Naive thymus-derived CD8-positive, alpha-beta T cell (primary cell): ENCODE measurements at regions of chr5 and their contacts with region 1.

Region 1: DNA sequence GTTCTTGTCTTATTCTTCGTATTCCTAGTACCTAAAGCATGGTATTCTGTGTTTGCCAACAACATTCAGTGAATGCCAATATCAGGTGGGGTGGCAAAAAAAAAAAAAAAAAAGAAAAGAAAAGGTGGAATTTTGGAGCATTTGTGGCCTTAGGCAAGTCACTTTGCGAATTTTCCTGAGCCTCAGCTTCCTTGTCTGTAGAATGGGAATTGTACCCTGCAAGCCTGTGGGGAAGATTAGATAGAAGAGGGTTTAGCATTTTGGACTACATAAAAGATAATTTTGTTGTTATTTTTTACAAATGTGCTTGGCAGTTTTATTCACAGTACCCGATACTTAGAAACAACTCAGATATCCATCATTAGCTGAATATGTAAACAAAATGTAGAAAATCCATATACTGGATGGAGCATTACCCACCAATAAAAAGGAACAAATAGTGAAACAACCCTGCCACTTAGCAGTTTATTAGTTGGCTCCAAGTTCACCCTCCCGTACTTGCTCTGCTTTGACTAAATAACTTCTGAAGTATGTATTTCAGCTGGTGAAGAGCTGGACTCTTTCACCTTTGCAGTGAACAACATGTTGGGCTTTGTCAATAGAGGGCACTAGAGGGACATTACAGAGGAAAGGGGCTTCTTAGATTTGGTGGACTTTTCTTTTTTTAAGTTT is 13.6 kb downstream of the UBE2D2 start:
- DNase-seq: peak in 6 of 10 donors; percentile 14 to 62 (median 44)
- ATAC-seq: peak; percentile 39 to 58
- H3K4me3 Mint-ChIP-seq: peak overlapping the region in 9 of 10 donors; percentile 23 to 75 (median 65)
- H3K27ac Mint-ChIP-seq: peak overlapping the region in 9 of 10 donors; percentile 52 to 93 (median 87)
- H3K4me1 Mint-ChIP-seq: peaks cover 33 to 87% (median 78%) of the 10 kb centered on the region in 4 donors
- H3K27me3 Mint-ChIP-seq: no peaks in the 10 kb centered on the region

Region 2: DNA sequence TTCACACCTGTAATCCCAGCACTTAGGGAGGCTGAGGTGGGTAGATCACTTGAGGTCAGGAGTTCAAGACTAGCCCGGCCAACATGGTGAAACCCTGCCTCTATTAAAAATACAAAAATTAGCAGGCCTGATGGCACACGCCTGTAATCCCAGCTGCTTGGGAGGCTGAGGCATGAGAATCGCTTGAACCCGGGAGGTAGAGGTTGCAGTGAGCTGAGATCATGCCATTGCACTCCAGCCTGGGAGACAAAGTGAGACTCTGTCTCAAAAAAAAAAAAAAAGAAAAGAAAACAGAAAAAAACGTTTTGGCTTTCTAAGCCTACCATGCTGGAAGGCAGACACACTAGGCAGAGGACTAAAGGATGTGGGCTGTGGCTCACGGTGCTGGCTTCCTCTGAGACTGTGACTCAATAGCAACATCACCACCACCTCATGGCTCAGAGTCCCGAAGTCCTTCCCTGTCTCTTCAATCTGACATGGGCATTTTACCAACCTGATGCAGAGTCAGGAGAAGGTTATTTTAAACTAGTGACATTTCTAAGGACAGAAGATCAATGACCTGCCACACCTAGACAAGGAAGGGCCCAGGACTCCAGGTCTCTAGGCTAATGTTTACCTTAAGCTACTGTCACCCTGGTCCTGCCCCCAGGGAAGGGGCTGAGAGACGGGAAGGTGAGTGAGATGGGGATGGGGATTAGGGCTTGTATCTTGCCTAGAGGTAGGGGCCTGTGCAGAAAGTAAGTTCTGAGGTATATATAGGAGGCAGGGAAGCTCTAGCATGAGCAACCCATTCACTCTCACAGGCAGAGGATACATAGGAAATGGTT is 116.0 kb before region 1 on chr5:
- POLR2A ChIA-PET with region 1: no interaction called
- DNase-seq: peak; percentile 49 to 90 (median 76)
- ATAC-seq: peak; percentile 98 to 99
- H3K4me3 Mint-ChIP-seq: peak overlapping the region; percentile 16 to 70 (median 64)
- H3K27ac Mint-ChIP-seq: peak overlapping the region; percentile 90 to 97 (median 94)
- H3K4me1 Mint-ChIP-seq: peaks cover 34 to 75% (median 57%) of the 10 kb centered on the region in 4 donors
- H3K27me3 Mint-ChIP-seq: no peaks in the 10 kb centered on the region

Region 3: GRCh38 chr5:139474890-139475791 is 99.6 kb before region 1 on chr5:
- POLR2A ChIA-PET with region 1: no interaction called
- DNase-seq: peak in 4 of 10 donors; percentile 18 to 68 (median 38)
- ATAC-seq: peak; percentile 58 to 70
- H3K4me3 Mint-ChIP-seq: peak overlapping the region; percentile 37 to 79 (median 60)
- H3K27ac Mint-ChIP-seq: peak overlapping the region; percentile 78 to 97 (median 88)
- H3K4me1 Mint-ChIP-seq: peaks cover 31 to 89% (median 82%) of the 10 kb centered on the region in 4 donors
- H3K27me3 Mint-ChIP-seq: no peaks in the 10 kb centered on the region

Region 4: DNA sequence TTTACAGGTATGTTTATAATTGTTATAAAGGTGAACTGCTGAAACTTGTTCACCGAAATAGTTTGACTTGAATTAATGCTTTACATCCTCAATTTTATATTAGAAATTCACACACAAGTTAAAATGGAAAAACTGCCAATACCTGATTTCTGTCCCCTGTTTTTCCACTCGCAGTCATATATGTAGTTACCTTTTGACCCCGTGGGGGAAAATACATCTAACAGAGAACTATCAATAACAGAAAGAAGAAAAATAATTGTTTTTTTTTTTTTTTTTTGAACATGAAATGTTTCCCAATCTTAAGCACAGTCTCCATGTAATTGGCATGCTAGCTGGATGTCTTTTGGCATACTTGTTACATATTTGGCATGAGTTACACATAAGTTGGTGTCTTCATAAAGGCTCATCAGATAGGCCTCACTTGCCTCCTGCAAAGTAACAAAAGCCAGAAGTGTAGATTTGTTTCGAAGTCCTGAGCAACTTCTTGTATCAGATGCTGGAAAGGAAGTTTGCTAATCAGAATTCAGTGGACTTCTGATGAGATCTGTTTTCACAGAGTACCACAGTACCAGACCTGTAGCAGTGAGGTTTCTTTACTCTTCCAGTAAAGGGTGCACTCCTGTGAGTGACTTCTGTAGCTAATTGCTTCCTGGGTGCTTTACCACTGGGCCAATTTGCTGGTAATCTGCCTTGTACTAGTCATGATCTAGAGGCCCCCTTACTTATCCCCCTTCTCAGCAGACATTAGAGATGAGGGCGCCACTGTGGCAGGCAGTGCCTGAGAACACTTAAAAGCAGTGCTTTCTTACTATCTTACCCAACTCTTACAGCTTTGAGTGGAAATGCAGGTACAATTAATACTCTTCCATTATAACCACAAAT is 37.2 kb after region 1 on chr5:
- POLR2A ChIA-PET with region 1: interaction called, 10 read pairs
- DNase-seq: peak in 1 of 10 donors; percentile 10
- ATAC-seq: peak; percentile 47 to 64
- H3K4me3 Mint-ChIP-seq: no peak overlapping the region
- H3K27ac Mint-ChIP-seq: peak overlapping the region; percentile 43 to 89 (median 76)
- H3K4me1 Mint-ChIP-seq: peaks cover 10 to 41% (median 29%) of the 10 kb centered on the region in 4 donors
- H3K27me3 Mint-ChIP-seq: no peaks in the 10 kb centered on the region